Activated CD4-positive, alpha-beta T cell treated with anti-CD3 and anti-CD28 coated beads for 36 hours (primary cell): ENCODE measurements at regions of chrX and their contacts with region 1.

Region 1: GRCh38 chrX:43958529-43958928 is 14.7 kb downstream of the NDP start:
- DNase-seq: peak; percentile 6
- ATAC-seq: peak; percentile 65
- H3K4me3 Mint-ChIP-seq: no peak overlapping the region
- H3K27ac Mint-ChIP-seq: no peak overlapping the region
- H3K4me1 Mint-ChIP-seq: peaks cover 2% of the 10 kb centered on the region
- H3K27me3 Mint-ChIP-seq: no peaks in the 10 kb centered on the region

Region 2: DNA sequence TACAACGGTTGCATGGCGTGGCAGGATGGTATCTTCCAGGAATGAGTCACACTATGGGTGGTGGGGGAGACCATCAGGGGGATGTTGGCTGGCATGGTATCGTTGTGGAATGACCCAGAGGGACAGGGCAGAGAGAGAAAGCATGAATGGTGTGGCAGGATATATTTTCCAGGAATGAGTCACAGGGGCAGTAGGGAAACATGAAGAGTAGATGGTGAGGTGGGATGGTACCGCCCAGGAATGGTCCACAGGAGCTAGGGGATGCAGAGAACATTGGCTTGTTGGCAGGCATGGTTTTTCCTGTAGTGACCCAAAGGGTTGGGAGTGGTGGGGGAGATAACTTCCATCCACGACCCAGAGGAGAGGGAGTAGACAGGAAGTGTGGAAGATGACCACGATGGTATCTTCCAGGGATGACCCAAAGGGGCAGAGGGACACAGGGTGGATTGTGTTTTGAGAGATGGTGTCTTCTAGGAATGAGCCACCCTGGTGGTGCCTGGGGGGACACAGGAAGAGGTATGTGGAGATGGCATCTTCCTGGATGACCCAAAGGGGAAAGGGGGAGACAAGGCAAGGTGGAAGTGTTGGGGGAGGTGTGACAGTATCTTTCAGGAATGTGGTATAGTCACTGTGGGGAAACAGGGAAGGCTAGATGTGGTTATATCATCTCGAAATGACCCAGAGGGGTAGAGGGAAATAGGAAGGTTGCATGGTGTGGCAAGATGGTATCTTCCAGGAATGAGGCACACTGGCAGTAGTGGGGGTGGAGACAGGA is 239.8 kb before region 1 on chrX:
- CTCF ChIA-PET with region 1: no interaction called
- POLR2A ChIA-PET with region 1: no interaction called
- intact Hi-C with region 1: no loop called
- DNase-seq: no peak
- ATAC-seq: no peak
- H3K4me3 Mint-ChIP-seq: no peak overlapping the region
- H3K27ac Mint-ChIP-seq: no peak overlapping the region
- H3K4me1 Mint-ChIP-seq: no peaks in the 10 kb centered on the region
- H3K27me3 Mint-ChIP-seq: no peaks in the 10 kb centered on the region

Region 3: DNA sequence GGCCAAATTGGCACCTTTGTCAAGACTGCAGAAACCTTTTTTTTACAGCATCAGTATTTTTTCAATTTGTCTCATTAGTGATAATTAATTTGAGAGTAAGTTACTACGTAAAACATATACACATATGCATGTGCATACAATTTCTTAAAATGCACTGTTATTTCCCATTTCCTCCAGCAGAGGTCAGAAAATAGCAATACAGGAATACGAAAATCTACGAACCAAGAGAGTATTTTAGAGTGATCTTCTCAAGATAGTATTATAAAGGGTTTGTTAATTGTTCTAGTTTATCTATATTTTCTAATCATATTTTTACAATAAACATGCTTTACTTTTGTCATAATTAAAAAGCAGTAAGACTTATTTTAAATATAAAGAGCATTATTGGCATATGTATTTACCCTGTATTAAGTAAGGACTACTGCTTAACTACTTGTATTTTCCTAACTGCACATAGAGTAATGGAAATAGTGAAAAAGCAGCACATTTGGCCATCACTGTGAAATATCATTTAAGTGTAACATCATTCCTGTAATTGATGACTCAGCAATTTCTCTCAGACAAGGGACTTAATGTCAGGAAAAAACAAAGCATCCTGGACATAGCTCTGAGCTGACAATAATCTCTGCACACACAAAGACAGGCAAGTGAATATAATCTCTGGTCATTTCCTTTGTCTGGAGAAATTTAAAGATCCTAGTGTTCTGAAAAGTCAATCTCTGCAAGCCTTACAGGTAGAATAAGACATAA is 121.9 kb before region 1 on chrX:
- CTCF ChIA-PET with region 1: interaction called, 4 read pairs
- POLR2A ChIA-PET with region 1: no interaction called
- intact Hi-C with region 1: loop called in 1 of 2 experiments (anchors 1 kb)
- DNase-seq: no peak
- ATAC-seq: no peak
- H3K4me3 Mint-ChIP-seq: no peak overlapping the region
- H3K27ac Mint-ChIP-seq: no peak overlapping the region
- H3K4me1 Mint-ChIP-seq: no peaks in the 10 kb centered on the region
- H3K27me3 Mint-ChIP-seq: no peaks in the 10 kb centered on the region

Region 4: DNA sequence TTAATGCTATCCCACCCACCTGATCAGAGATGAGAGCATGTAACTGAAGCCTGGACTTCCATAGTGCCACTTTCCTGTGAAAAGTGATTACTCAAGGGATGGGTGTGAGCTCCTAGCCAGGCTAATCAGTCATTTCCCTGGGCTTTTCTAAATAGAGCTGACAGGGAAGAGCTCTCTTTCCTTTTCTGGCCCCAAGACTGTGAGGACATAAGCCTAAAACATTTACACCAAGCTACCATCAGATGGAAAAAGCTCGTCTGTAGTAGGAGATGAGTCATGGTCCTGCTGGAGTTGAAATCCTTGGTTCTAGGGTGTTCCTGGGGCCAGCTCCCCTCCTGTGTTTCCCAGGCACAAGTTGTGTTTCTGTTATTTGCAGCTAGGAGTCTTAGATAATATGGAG is 67.0 kb after region 1 on chrX:
- CTCF ChIA-PET with region 1: interaction called, 6 read pairs
- POLR2A ChIA-PET with region 1: no interaction called
- intact Hi-C with region 1: loop called (anchors 5 kb)
- DNase-seq: no peak
- ATAC-seq: no peak
- H3K4me3 Mint-ChIP-seq: no peak overlapping the region
- H3K27ac Mint-ChIP-seq: no peak overlapping the region
- H3K4me1 Mint-ChIP-seq: peaks cover 2% of the 10 kb centered on the region
- H3K27me3 Mint-ChIP-seq: no peaks in the 10 kb centered on the region

Region 5: GRCh38 chrX:45186643-45187026 is 1228.1 kb after region 1 on chrX:
- CTCF ChIA-PET with region 1: no interaction called
- POLR2A ChIA-PET with region 1: no interaction called
- intact Hi-C with region 1: loop called in 1 of 2 experiments (anchors 2 kb)
- DNase-seq: no peak
- ATAC-seq: no peak
- H3K4me3 Mint-ChIP-seq: peak overlapping the region; percentile 70
- H3K27ac Mint-ChIP-seq: peak overlapping the region; percentile 72
- H3K4me1 Mint-ChIP-seq: peaks cover 31% of the 10 kb centered on the region
- H3K27me3 Mint-ChIP-seq: no peaks in the 10 kb centered on the region